T-cell (primary cell): ENCODE measurements at regions of chr1 and their contacts with region 1.

Region 1: GRCh38 chr1:32291708-32292492 is at the start of gene HDAC1:
- DNase-seq: peak; percentile 90 to 97 (median 95)
- ATAC-seq: peak; percentile 96 to 97 (median 97)
- H3K4me3 ChIP-seq: peak within 1 kb of the TSS; percentile 72 to 84
- H3K4me3 Mint-ChIP-seq: peak within 1 kb of the TSS; percentile 95 to 99 (median 98)
- H3K27ac ChIP-seq: peak within 1 kb of the TSS; percentile 88
- H3K27ac Mint-ChIP-seq: peak within 1 kb of the TSS; percentile 97 to 98
- H3K4me1 ChIP-seq: peaks cover 24 to 61% of the 10 kb centered on the region in 2 experiments
- H3K4me1 Mint-ChIP-seq: peaks cover 45 to 62% (median 55%) of the 10 kb centered on the region in 3 donors
- H3K27me3 ChIP-seq: no peaks in the 10 kb centered on the region
- H3K27me3 Mint-ChIP-seq: no peaks in the 10 kb centered on the region
- total RNA-seq, gene HDAC1: 117 to 153 (median 142) TPM

Region 2: DNA sequence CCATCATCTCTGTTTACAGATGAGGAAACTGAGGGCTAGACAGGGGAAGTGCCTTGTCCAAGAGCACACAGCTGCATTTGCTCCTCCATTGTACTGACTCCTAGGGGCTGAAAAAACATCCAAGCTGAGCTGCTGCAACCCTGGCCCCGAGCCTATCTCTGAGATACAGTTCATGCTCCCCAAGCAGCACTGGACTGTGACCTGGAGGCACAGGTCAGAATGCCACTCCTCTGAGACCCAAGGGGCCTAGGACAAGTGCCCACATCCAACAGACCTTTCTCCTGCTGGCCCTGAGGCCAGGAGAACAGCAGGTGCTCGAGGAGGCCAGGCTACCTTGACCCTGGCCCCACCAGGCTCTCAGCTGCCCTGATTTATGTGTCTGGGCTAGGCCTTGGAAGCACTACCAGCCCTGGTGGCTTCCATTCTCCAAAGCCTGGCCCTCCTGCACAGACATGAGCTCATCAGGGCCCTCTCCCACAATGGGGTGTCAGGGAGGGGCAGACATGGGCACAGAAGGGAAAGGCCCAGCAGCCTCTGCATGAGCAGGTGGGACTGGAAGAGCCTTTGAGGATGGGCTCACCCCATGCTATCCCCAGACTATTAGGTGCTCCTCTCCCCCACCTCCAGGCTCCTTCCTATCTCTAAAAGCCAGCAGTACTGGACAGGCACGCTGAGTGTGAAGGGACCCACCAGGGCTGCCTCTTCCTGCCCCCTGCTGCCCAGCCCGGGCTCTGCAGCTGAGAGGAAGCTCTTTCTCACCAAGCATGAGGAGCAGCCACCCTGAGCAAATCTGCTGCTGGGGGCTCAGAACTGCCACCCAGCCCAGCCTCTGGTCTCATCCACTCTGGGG is 546.6 kb before region 1 on chr1:
- CTCF ChIA-PET with region 1: no interaction called
- POLR2A ChIA-PET with region 1: no interaction called
- DNase-seq: peak in 25 of 35 experiments; percentile 16 to 53 (median 35)
- ATAC-seq: peak; percentile 62 to 66 (median 64)
- H3K4me3 ChIP-seq: no peak overlapping the region
- H3K4me3 Mint-ChIP-seq: no peak overlapping the region
- H3K27ac ChIP-seq: no peak overlapping the region
- H3K27ac Mint-ChIP-seq: no peak overlapping the region
- H3K4me1 ChIP-seq: peaks cover 0 to 47% of the 10 kb centered on the region in 2 experiments
- H3K4me1 Mint-ChIP-seq: peaks cover 5 to 30% (median 12%) of the 10 kb centered on the region in 3 donors
- H3K27me3 ChIP-seq: peaks cover 0 to 25% of the 10 kb centered on the region in 2 experiments
- H3K27me3 Mint-ChIP-seq: peaks cover 3 to 4% of the 10 kb centered on the region in 2 donors

Region 3: GRCh38 chr1:32151319-32151787 is 140.5 kb before region 1 on chr1:
- CTCF ChIA-PET with region 1: no interaction called
- POLR2A ChIA-PET with region 1: interaction called in 1 of 2 experiments, 12 read pairs
- DNase-seq: no peak
- ATAC-seq: no peak
- H3K4me3 ChIP-seq: no peak overlapping the region
- H3K4me3 Mint-ChIP-seq: no peak overlapping the region
- H3K27ac ChIP-seq: no peak overlapping the region
- H3K27ac Mint-ChIP-seq: no peak overlapping the region
- H3K4me1 ChIP-seq: no peaks in the 10 kb centered on the region
- H3K4me1 Mint-ChIP-seq: peaks cover 18 to 28% (median 20%) of the 10 kb centered on the region in 3 donors
- H3K27me3 ChIP-seq: no peaks in the 10 kb centered on the region
- H3K27me3 Mint-ChIP-seq: no peaks in the 10 kb centered on the region

Region 4: GRCh38 chr1:32240140-32240951 is 51.6 kb before region 1 on chr1:
- CTCF ChIA-PET with region 1: interaction called in 1 of 2 experiments, 16 read pairs
- POLR2A ChIA-PET with region 1: no interaction called
- DNase-seq: peak; percentile 30 to 78 (median 58)
- ATAC-seq: peak; percentile 75 to 86 (median 78)
- H3K4me3 ChIP-seq: peak overlapping the region; percentile 75 to 89
- H3K4me3 Mint-ChIP-seq: peak overlapping the region; percentile 84 to 89 (median 87)
- H3K27ac ChIP-seq: peak overlapping the region; percentile 42
- H3K27ac Mint-ChIP-seq: peak overlapping the region; percentile 71 to 86
- H3K4me1 ChIP-seq: peaks cover 5 to 30% of the 10 kb centered on the region in 2 experiments
- H3K4me1 Mint-ChIP-seq: peaks cover 13 to 17% (median 16%) of the 10 kb centered on the region in 3 donors
- H3K27me3 ChIP-seq: no peaks in the 10 kb centered on the region
- H3K27me3 Mint-ChIP-seq: no peaks in the 10 kb centered on the region

Region 5: DNA sequence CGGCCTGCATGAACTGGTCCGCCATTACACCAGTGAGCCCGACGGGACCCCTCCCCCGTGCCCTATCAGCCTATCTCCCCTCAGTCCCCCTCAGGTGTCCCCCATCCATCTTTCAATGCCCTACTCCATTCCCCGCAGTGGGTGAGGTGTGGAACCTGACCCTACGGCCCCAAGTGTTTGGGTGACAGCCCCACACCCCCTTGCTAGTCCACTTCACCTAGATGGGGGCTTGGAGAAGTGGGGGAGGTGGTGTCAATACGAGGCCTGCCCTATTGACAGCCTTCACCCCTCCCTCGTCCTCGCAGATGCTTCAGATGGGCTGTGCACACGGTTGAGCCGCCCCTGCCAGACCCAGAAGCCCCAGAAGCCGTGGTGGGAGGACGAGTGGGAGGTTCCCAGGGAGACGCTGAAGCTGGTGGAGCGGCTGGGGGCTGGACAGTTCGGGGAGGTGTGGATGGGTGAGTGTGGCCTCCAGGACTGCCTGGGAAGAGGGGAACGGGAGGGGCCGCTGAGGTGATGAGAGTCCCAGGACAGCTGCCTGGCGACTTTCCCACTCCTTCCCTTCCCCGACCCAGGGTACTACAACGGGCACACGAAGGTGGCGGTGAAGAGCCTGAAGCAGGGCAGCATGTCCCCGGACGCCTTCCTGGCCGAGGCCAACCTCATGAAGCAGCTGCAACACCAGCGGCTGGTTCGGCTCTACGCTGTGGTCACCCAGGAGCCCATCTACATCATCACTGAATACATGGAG is 15.7 kb before region 1 on chr1:
- CTCF ChIA-PET with region 1: no interaction called
- POLR2A ChIA-PET with region 1: interaction called, 3 to 11 read pairs
- DNase-seq: no peak
- ATAC-seq: no peak
- H3K4me3 ChIP-seq: no peak overlapping the region
- H3K4me3 Mint-ChIP-seq: peak overlapping the region in 1 of 3 donors; percentile 29
- H3K27ac ChIP-seq: peak overlapping the region; percentile 35
- H3K27ac Mint-ChIP-seq: peak overlapping the region; percentile 75 to 95
- H3K4me1 ChIP-seq: peaks cover 27 to 59% of the 10 kb centered on the region in 2 experiments
- H3K4me1 Mint-ChIP-seq: peaks cover 56 to 63% (median 56%) of the 10 kb centered on the region in 3 donors
- H3K27me3 ChIP-seq: no peaks in the 10 kb centered on the region
- H3K27me3 Mint-ChIP-seq: no peaks in the 10 kb centered on the region